SK-N-SH (cell line): ENCODE measurements at regions of chr1 and their contacts with region 1.

Region 1: DNA sequence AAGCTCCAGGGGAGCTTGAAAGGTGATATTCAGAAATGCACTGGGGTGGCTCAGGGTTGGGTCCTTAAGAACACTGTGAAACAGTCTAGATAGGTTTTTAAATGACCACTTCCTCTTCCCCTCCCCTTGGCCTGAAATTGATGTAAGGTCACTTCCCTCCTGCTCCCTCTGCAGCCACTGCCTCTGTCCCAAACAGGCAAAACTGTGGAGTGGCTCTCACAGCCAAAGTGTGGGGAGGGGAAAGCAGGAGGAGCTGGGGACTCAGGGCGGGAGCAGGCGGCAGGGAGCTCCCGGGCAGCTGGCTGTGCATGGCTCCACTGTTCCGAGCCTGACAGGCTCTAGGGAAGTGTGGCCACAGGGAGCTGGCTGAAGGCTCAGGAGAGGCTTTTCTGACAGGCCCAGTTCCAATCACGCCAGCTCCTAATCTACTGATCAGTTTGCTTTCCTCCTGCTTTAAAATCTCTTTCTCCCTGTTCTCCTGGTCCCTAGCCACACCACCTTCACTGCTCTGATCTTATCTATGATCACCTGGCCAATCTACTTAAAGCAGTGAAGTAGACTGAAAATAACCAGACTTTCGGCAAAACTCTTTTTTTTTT is 5.1 kb upstream of the CSRP1 start:
- DNase-seq: peak; percentile 44
- H3K4me3 ChIP-seq: no peak overlapping the region
- H3K27ac ChIP-seq: no peak overlapping the region
- H3K4me1 ChIP-seq: peaks cover 14 to 15% of the 10 kb centered on the region in 2 experiments; a peak in 2 of 4 replicates
- H3K27me3 ChIP-seq: no peaks in the 10 kb centered on the region
- CTCF ChIP-seq: no peak
- EP300 ChIP-seq: no peak
- RAD21 ChIP-seq: no peak

Region 2: DNA sequence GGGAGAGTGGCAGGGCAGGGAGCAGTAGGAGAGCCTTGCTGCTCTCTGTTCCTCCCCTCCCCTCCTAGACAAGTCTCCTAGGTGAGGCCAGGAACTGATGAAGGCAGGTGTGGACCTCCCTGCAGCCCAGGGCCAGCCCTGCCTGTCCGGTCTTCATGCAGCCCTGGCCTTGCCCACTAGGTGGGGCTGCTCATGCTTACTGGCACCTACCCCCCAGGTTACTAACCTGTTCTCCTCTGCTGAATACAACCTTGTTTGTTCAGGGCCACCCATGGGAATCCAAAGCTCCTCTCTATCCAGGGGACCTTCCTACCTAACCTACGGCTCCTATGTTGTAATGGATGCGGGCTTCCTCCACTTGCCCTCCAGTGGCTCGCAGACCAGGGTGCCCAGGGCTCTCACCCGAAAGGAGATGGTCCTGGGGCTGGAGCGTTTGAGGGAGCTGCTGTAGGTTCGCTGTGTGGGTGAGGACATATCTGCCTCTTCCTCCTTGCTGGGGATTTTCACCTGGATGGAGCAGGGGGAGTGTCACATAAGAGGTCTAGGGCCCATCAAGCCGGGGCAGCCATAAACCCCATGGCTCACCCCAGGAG is 126.6 kb before region 1 on chr1:
- CTCF ChIA-PET with region 1: interaction called, 15 read pairs
- POLR2A ChIA-PET with region 1: no interaction called
- DNase-seq: peak; percentile 82
- H3K4me3 ChIP-seq: no peak overlapping the region; a peak in 1 of 4 replicates
- H3K27ac ChIP-seq: no peak overlapping the region
- H3K4me1 ChIP-seq: peaks cover 5 to 11% of the 10 kb centered on the region in 2 experiments; a peak in 3 of 4 replicates
- H3K27me3 ChIP-seq: no peaks in the 10 kb centered on the region
- CTCF ChIP-seq: peak; percentile 85
- EP300 ChIP-seq: no peak
- RAD21 ChIP-seq: peak; percentile 61

Region 3: DNA sequence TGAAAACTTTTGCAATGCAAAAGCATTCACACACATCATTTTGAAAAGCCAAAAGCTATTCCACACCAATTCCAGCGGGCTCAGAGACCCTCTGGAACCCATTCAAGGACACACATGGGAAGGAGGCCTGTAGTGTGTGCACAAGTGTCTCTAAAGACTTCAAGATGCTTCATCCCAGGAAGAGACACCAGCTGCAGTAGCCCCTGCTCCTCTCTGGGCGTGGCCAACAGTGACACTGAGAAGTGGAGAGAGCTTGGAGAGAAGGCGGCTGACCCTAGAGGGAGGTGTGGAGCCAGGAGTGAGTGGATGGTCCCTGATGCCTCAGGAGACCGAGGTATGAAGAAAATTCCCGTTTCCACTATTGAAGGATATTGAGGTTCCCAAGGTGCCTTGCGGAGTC is 75.6 kb before region 1 on chr1:
- CTCF ChIA-PET with region 1: interaction called, 85 read pairs
- POLR2A ChIA-PET with region 1: no interaction called
- DNase-seq: no peak
- H3K4me3 ChIP-seq: no peak overlapping the region
- H3K27ac ChIP-seq: no peak overlapping the region
- H3K4me1 ChIP-seq: peaks cover 4 to 5% of the 10 kb centered on the region in 2 experiments; a peak in 2 of 4 replicates
- H3K27me3 ChIP-seq: no peaks in the 10 kb centered on the region; the same call in 1 of the 2 replicates
- CTCF ChIP-seq: peak; percentile 13; the same call in 1 of the 2 replicates
- EP300 ChIP-seq: no peak
- RAD21 ChIP-seq: no peak

Region 4: DNA sequence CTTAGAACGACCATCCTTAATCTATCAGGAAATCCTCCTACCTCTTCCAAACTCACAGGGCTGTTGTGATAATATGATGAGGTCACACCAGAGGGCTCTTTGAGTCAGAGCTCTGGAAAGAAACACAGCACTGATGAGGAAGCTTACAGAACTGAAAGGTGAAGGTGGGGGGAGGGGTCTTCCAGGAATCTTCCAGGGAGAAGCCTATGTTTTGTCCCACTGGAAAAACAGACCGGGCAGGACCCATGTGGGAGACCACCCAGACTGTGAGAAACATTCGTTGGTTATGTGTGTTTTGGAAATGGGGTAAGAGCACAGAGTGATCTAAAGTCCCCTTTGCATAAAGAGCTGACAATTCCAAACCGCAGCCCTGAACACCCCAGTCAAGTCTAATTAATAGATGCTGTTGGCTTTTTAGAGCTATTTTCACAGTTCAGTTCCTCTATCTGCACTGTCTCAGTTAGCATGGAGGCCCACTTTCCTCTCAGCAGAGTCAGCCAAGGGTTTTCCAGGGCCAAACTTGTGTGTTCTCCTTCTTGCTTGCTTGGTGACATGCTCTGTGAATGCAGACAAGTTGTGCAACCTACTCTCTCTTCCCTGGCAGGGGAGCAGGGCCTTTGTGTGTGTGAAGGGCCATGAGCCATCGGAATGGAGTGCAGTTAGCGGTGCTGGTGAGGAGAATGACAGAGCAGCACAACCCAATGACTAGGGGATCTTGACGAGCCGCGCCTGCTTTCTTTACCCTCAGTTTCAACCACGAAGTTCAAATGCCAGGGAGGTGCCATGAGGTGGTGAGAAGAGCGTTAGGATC is 55.3 kb before region 1 on chr1:
- CTCF ChIA-PET with region 1: interaction called, 124 read pairs
- POLR2A ChIA-PET with region 1: interaction called, 3 read pairs
- DNase-seq: no peak
- H3K4me3 ChIP-seq: no peak overlapping the region; a peak in 1 of 4 replicates
- H3K27ac ChIP-seq: peak overlapping the region in 1 of 2 experiments; percentile 88; a peak in 2 of 4 replicates
- H3K4me1 ChIP-seq: peaks cover 11 to 35% of the 10 kb centered on the region in 2 experiments; a peak in 3 of 4 replicates
- H3K27me3 ChIP-seq: no peaks in the 10 kb centered on the region
- CTCF ChIP-seq: no peak
- EP300 ChIP-seq: 0 out of 4 replicates have a peak, but pooled peaks of 1 of the 2 experiments have one; percentile 13
- RAD21 ChIP-seq: no peak

Region 5: GRCh38 chr1:201495471-201496295 is 16.4 kb before region 1 on chr1:
- CTCF ChIA-PET with region 1: interaction called, 860 read pairs
- POLR2A ChIA-PET with region 1: no interaction called
- DNase-seq: peak; percentile 42
- H3K4me3 ChIP-seq: no peak overlapping the region
- H3K27ac ChIP-seq: no peak overlapping the region; a peak in 1 of 4 replicates
- H3K4me1 ChIP-seq: peaks cover 12 to 20% of the 10 kb centered on the region in 2 experiments; a peak in 3 of 4 replicates
- H3K27me3 ChIP-seq: no peaks in the 10 kb centered on the region
- CTCF ChIP-seq: no peak
- EP300 ChIP-seq: no peak
- RAD21 ChIP-seq: no peak

Region 6: DNA sequence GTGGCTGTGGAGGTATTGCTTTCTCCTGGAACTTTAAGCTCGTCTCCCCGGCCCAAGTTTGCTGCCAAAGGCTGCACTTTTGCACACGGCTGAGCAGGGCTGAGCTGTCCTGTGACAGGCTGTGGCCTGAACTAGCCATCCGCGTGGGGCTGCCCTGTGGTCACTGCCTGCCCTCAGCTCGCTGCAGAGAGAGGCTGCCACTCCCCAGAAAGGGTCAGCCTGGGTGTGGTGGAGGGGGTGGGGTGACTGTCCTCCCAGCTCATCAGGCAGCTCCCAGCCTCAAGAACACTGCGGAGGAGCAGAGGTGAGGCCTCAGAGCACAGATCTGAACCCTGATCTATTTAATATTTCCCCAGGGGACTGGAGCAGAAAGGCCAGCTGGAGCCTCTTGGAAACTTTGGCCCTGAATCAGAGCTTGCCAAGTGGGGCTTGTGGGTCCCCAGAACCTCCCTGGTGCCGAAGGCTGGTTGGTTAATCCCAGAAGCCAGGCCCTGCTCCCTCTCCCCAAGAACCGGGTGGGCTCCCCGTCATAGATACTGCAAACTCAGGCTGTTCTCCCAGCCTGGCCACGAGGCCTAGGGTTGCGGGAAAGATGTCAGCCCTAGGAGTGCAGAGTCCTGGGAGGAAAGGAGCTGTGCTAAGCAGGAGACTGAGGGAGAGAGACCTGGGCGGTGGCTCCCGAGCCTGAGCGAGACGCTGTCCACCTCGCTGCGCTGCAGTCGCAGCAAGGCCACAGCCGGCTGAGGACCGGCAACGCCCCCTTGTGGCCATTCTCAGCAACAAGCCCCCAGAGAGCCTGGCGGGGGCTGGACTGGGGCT is 191.8 kb after region 1 on chr1:
- CTCF ChIA-PET with region 1: interaction called, 11 read pairs
- POLR2A ChIA-PET with region 1: no interaction called
- DNase-seq: peak; percentile 88
- H3K4me3 ChIP-seq: no peak overlapping the region; a peak in 1 of 4 replicates
- H3K27ac ChIP-seq: peak overlapping the region; percentile 77 to 98
- H3K4me1 ChIP-seq: peaks cover 28 to 45% of the 10 kb centered on the region in 2 experiments
- H3K27me3 ChIP-seq: no peaks in the 10 kb centered on the region
- CTCF ChIP-seq: peak; percentile 96
- EP300 ChIP-seq: no peak
- RAD21 ChIP-seq: peak; percentile 97